Ascending aorta (tissue), 2 donors: ENCODE measurements at regions of chr6 and their contacts with region 1.

Region 1: GRCh38 chr6:96897383-96898240 is at the start of gene NDUFAF4:
- DNase-seq: peak; percentile 87 to 98
- H3K4me3 ChIP-seq: peak within 1 kb of the TSS; percentile 80 to 99
- H3K27ac ChIP-seq: peak within 1 kb of the TSS; percentile 82 to 92
- H3K4me1 ChIP-seq: peaks cover 2 to 15% of the 10 kb centered on the region in 2 donors
- H3K27me3 ChIP-seq: no peaks in the 10 kb centered on the region
- CTCF ChIP-seq: peak; percentile 91 to 93 (median 93)
- total RNA-seq, gene NDUFAF4: 4.8 TPM

Region 2: DNA sequence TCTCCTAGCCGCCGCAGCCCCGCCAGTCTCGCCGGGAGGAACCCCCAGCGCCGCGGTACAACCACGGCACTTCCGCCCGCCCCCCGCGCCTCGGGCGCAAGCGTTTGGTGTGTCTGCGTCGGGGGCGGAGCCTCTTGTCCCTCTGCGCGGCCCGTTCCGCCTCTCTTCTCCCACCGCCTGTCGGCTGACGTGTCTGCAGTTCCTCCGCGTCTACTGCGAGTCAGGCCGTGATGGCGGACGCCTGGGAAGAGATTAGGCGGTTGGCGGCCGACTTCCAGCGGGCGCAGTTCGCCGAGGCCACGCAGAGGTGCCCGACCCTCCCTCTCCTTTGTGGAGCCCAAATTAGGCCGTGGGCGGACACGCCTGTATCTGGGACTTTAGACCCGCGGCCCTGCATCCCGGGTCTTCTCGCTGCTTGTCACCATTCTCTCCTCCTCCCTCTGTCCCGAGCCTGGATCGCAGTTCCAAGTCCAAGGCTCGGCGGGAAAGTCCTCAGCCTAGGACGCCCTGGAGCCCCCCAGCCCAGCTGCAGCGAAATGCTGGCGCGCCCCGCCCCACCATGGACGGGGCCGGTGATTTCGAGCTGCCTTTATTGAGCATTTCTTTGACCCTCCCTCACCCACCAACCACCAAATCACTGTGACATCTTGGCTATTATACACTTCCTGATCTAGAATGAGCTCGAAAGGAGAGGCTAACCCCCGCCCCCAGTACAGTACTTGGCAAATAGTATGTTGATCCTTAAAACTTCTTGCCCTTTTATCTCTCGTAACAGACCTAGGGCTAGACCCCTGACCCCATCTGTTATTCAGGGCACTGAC is 375.8 kb before region 1 on chr6 and contains the start of gene UFL1:
- intact Hi-C with region 1: loop called (anchors 2 kb)
- DNase-seq: peak; percentile 84 to 97
- H3K4me3 ChIP-seq: peak within 1 kb of the TSS; percentile 76 to 89
- H3K27ac ChIP-seq: peak within 1 kb of the TSS; percentile 92 to 97
- H3K4me1 ChIP-seq: peaks cover 4 to 19% of the 10 kb centered on the region in 2 donors
- H3K27me3 ChIP-seq: no peaks in the 10 kb centered on the region
- CTCF ChIP-seq: peak in 1 of 3 experiments; percentile 23
- total RNA-seq, gene UFL1: 15.4 TPM

Region 3: DNA sequence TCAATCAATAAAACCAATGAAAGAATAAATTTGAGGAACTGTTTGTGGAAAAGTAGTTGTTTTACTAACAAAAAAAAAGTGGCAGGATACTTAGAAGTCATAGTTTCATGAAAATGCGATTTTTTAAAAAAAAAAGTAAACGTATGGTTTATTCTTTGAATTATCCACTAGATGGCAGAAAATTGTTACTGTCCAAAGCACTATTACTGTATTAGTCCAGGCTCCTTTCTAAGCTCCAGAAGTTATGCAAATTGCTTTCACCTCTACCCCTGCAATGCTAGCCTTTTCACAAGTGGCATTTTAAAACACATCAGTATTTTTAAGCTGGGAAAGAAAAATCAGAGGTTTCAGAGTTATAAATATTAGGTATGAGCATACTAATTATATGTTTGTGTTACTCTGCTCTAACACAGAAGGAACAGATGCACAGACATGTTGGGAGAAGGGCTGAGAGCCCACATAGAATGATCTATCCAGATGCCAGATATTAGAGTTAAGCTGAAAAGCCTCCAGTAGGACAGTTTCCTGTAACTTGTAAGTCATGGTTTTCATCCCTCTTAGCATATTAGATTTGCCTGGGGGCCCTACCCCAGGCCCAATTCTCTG is 270.8 kb before region 1 on chr6:
- intact Hi-C with region 1: loop called (anchors 1 kb)
- DNase-seq: no peak
- H3K4me3 ChIP-seq: no peak overlapping the region
- H3K27ac ChIP-seq: no peak overlapping the region
- H3K4me1 ChIP-seq: no peaks in the 10 kb centered on the region
- H3K27me3 ChIP-seq: no peaks in the 10 kb centered on the region
- CTCF ChIP-seq: peak in 2 of 3 experiments; percentile 26 to 49

Region 4: DNA sequence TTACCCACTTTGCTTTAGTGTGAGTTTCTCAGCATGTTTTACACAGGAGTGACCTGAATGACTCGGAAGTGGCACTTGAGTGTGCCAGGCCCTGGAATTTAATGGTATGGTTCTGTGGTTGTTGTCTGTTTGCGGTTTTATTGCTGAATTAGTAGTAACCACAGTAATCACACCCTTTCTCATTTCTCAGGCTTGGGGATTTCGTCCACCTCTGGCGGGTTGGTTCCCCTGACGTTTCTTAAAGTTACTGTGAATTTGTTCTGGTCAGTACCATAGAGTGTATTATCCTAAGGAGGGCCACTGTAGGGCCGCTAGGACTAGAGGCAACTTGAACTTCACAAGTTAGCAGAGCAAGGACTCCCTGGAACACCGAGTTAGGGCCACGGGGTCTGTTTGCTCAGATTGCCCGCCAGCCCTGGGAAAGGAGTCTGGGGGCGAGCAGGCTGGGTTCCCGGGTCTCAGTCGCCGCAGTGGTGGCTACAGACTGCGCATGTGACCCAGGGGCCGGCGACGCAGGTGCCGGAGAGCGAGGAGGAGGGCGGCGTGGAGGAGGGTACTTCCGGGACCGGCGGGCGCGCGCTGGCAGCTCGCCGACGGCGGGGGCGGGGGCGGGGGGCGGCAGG is 26.4 kb after region 1 on chr6:
- intact Hi-C with region 1: loop called (anchors 1 kb)
- DNase-seq: no peak
- H3K4me3 ChIP-seq: peak overlapping the region; percentile 56 to 72
- H3K27ac ChIP-seq: peak overlapping the region; percentile 64 to 66
- H3K4me1 ChIP-seq: no peaks in the 10 kb centered on the region
- H3K27me3 ChIP-seq: no peaks in the 10 kb centered on the region
- CTCF ChIP-seq: no peak

Region 5: DNA sequence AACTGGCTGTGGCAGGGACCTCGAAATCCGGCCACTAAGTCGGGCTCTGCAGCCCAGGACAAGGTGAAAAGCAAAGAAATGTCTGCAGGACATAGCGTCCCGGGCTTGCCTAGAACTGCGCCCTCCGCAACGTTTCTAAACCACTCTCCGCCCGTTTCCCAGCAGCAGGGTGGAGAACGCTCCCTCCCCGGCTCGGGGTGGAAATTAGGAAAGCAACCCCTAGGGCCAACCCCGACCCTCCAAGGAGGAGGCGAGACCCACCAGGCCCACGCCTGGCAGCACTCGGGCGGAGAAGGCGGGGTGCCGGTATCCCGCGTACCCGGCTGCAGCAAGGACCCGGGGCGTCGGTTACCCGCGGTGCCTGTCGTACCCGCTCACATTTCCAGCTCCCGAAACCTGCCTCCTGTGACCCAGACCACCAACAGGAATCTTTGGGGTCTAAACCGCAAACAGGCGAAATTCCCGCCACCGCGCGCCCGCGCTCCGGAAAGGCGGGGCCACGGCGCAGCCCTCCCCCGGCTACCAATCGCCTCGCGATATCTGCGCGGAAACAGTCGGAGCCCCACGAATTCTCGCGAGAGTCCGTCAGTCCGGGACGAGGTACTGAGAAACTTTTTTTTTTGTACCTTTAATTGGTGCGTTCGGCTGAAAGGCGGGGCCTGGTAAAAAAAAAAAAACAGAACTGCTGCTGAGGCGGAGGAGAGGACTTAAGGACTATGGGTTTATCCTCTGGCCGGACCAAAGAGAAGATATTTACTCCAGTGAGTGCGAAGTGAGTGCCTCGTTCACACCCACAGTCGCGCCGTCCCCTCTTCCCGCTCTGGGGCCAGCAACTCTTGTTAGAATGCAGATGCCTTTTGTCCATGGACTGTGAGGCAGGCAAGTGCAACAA is 385.4 kb after region 1 on chr6 and contains the start of gene MMS22L:
- intact Hi-C with region 1: loop called (anchors 5 kb)
- DNase-seq: peak; percentile 73 to 96
- H3K4me3 ChIP-seq: peak within 1 kb of the TSS; percentile 93 to 98
- H3K27ac ChIP-seq: peak within 1 kb of the TSS; percentile 50 to 58
- H3K4me1 ChIP-seq: peaks cover 0 to 4% of the 10 kb centered on the region in 2 donors
- H3K27me3 ChIP-seq: no peaks in the 10 kb centered on the region
- CTCF ChIP-seq: no peak
- total RNA-seq, gene MMS22L: 21.9 TPM